Activated CD4-positive, alpha-beta T cell treated with anti-CD3 and anti-CD28 coated beads, Interleukin-2, amount 10 ng/mL, durations not matched to agents 24 days and 14 days (primary cell): ENCODE measurements at regions of chr17 and their contacts with region 1.

Region 1: GRCh38 chr17:20226814-20227482 is 217.8 kb downstream of the SPECC1 start:
- DNase-seq: peak; percentile 95
- H3K4me3 Mint-ChIP-seq: no peak overlapping the region
- H3K27ac Mint-ChIP-seq: no peak overlapping the region
- H3K4me1 Mint-ChIP-seq: peaks cover 17% of the 10 kb centered on the region
- H3K27me3 Mint-ChIP-seq: peaks cover 4% of the 10 kb centered on the region

Region 2: DNA sequence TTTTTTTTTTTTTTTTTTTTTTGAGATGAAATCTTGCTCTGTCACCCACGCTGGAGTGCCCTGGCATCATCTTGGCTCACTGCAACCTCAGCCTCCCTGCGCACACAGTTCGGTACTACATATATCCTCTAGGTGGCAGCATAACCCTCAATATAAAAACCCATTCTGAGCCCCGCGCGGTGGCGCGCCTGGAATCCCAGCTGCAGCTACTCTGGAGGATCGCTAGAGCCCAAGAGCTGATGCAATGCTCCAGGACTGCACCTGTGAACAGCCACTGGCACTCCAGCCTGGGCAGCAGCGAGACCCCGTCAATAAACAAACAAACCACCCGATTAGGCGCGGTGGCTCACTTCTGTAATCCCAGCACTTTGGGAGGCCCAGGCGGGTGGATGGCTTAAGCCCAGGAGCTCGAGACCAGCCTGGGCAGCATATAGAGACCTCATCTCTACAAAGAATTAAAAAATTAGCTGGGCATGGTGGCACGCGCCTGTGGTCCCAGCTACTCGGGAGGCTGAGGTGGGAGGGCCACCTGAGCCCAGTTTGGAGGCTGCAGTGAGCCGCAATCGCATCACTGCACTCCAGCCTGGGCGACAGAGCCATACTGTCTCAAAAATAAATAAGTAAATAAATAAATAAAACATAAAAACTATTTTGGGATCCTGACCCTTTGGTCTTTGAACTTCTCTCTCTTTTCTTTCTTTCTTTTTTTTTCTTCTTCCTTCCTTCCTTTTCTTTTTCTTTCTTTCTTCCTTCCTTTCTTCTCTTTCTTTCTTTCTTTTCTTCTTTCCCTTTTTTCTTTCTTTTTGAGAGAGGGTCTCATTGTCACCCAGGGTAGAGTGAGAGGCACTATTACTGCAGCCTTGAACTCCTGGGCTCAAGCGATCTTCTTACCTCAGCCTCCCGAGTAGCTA is 233.9 kb before region 1 on chr17:
- intact Hi-C with region 1: loop called (anchors 5 kb)
- DNase-seq: peak; percentile 90
- H3K4me3 Mint-ChIP-seq: no peak overlapping the region
- H3K27ac Mint-ChIP-seq: no peak overlapping the region
- H3K4me1 Mint-ChIP-seq: peaks cover 5% of the 10 kb centered on the region
- H3K27me3 Mint-ChIP-seq: peaks cover 14% of the 10 kb centered on the region